ENCODE measurements at regions of chr14 and their contacts with region 1.

Region 1: DNA sequence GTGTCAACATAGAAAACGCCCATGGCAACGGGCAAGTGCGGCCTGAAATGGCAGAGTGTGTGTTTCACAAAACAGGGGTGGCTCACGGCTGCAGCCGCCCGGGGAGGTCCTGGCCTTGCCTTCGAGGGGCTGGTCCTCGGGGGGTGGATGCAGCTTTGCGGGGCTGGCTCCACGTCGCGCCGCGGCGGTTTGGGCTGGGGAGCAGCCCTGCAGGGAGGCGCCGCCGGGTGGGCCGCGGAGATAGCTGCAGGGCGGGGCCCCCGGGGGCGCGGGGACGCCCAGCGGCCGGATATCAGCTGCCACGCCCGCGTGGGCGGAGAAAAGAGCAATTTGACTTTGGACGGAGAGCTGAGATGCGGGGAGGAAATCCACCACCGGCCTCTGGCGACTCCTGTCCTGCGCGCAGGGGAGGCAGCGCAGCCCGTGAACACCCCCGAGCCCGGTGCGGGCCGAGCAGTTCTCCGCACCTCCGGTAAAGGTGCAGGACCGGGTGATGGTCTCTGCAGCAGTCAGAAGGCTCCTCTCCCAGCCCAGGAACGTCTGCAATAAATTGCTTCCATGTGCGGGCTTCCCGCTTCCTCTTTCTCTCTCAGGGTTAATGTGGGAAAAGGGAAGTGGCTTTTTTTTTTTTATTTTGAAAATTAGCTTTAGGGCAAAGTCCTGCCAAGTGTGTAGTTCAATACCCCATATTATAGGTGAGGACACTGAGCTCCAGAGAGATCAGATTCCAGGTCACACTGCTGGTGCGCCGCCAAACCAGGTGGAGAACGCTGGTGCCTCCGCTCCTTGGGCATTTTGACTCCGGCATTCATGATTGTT is 110.5 kb downstream of the ARF6 start:
- DNase-seq: peak; percentile 89
- ATAC-seq: peak; percentile 9
- H3K4me3 ChIP-seq: peak overlapping the region; percentile 64
- H3K27ac ChIP-seq: peak overlapping the region; percentile 97
- H3K4me1 ChIP-seq: peaks cover 72% of the 10 kb centered on the region
- H3K27me3 ChIP-seq: no peaks in the 10 kb centered on the region
- CTCF ChIP-seq: peak; percentile 32; the same call in 1 of the 2 replicates

Region 2: GRCh38 chr14:49867831-49868723 is 135.3 kb before region 1 on chr14:
- CTCF ChIA-PET with region 1: interaction called, 9 read pairs
- POLR2A ChIA-PET with region 1: interaction called, 22 read pairs
- intact Hi-C with region 1: loop called (anchors 1 kb)
- DNase-seq: peak; percentile 98
- ATAC-seq: peak; percentile 95
- H3K4me3 ChIP-seq: peak overlapping the region; percentile 71
- H3K27ac ChIP-seq: peak overlapping the region; percentile 67
- H3K4me1 ChIP-seq: peaks cover 33% of the 10 kb centered on the region
- H3K27me3 ChIP-seq: no peaks in the 10 kb centered on the region
- CTCF ChIP-seq: no peak

Region 3: GRCh38 chr14:49946320-49947141 is 56.9 kb before region 1 on chr14:
- CTCF ChIA-PET with region 1: interaction called, 3 read pairs
- POLR2A ChIA-PET with region 1: interaction called, 5 read pairs
- intact Hi-C with region 1: loop called (anchors 1 kb)
- DNase-seq: peak; percentile 93
- ATAC-seq: peak; percentile 82
- H3K4me3 ChIP-seq: peak overlapping the region; percentile 23; the same call in 1 of the 2 replicates
- H3K27ac ChIP-seq: peak overlapping the region; percentile 65
- H3K4me1 ChIP-seq: peaks cover 50% of the 10 kb centered on the region
- H3K27me3 ChIP-seq: no peaks in the 10 kb centered on the region
- CTCF ChIP-seq: no peak

Region 4: DNA sequence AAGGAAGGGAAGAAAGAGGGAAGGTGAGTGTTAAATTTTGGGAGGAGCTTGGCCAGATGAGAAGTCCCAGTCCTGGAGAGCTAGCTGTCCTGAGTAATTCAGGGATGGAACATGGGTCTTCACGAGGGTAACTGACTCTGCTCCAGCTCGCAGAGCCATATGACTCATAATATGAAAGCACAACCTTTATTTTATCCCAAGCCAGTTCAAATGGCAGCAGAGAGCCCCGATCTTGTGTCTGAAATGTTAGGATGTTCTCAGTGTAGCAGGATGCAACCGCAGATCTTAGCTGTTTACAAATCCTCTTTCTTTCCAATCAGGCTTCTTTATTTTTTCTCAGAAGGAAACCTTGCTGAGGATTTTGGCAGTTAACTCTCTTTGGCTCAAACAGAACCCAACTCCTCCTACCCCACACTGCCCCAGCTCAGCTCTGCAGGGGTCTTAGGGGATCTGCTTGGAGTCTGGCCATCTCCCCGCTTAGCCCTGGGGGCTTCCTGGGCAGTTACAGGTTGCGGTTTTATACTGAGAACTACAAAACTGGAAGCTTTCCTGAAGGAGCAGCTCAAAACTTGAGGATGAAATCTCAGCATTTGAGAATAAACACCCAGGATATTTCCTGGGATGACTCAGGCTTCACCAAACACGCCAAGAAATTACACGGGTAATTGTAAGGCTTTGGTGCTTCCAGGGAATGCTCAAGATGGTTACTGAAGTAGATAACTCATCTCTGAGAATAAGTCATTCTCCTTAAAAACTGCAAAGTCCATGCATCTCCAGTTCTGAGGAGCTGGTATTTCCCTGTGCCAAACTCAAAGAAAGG is 20.5 kb after region 1 on chr14:
- CTCF ChIA-PET with region 1: no interaction called
- POLR2A ChIA-PET with region 1: interaction called, 20 read pairs
- intact Hi-C with region 1: loop called (anchors 2 kb)
- DNase-seq: peak; percentile 85
- ATAC-seq: peak; percentile 84
- H3K4me3 ChIP-seq: peak overlapping the region; percentile 53
- H3K27ac ChIP-seq: peak overlapping the region; percentile 96
- H3K4me1 ChIP-seq: peaks cover 28% of the 10 kb centered on the region
- H3K27me3 ChIP-seq: no peaks in the 10 kb centered on the region
- CTCF ChIP-seq: no peak

Region 5: GRCh38 chr14:50060871-50061663 is 57.6 kb after region 1 on chr14:
- CTCF ChIA-PET with region 1: interaction called, 3 read pairs
- POLR2A ChIA-PET with region 1: interaction called, 10 read pairs
- intact Hi-C with region 1: loop called (anchors 1 kb)
- DNase-seq: peak; percentile 88
- ATAC-seq: peak; percentile 66
- H3K4me3 ChIP-seq: no peak overlapping the region
- H3K27ac ChIP-seq: peak overlapping the region; percentile 96
- H3K4me1 ChIP-seq: peaks cover 38% of the 10 kb centered on the region
- H3K27me3 ChIP-seq: no peaks in the 10 kb centered on the region
- CTCF ChIP-seq: peak; percentile 33; the same call in 1 of the 2 replicates

Measured in PC-3 (cell line).